ENCODE measurements at regions of chr22 and their contacts with region 1.

Region 1: GRCh38 chr22:41285820-41286638 is at the start of gene RANGAP1:
- DNase-seq: peak; percentile 99
- ATAC-seq: peak; percentile 94
- H3K4me3 Mint-ChIP-seq: peak within 1 kb of the TSS; percentile 88
- H3K27ac Mint-ChIP-seq: peak within 1 kb of the TSS; percentile 97
- H3K4me1 Mint-ChIP-seq: peaks cover 33% of the 10 kb centered on the region
- H3K27me3 Mint-ChIP-seq: no peaks in the 10 kb centered on the region
- total RNA-seq, gene RANGAP1: 140 to 157 TPM

Region 2: DNA sequence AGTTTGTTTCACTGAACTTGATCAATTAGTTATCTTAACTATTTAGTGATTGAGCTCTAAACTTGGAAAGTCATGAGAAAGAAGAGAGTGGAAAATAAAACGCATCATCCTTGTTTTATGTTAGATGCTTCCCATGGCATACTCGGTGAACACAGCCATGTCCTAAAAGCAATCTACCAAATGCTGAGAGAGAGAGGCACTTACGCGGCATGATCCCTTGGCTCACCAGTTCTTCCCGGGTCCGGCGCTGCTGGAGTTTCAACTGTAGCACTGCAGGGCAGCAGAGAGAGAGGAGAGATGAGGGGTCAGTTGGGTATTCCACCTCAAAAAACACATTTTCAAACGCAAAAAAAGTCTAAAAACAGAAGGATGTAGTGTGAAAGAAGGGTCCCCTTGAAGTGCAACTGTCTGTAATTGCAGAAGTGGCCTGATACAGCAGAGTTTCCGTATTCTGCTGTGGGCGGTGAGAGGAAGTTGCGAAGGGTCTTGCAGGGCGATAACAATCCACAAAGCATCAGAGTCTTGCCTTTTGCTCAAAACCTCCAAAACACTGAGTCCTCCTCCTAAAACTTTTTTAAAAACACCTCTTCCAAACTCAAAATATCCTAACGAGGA is 822.9 kb before region 1 on chr22:
- CTCF ChIA-PET with region 1: no interaction called
- POLR2A ChIA-PET with region 1: no interaction called
- intact Hi-C with region 1: loop called in 1 of 2 experiments (anchors 5 kb)
- DNase-seq: peak; percentile 74
- ATAC-seq: peak; percentile 84
- H3K4me3 Mint-ChIP-seq: peak overlapping the region; percentile 87
- H3K27ac Mint-ChIP-seq: peak overlapping the region; percentile 91
- H3K4me1 Mint-ChIP-seq: peaks cover 65% of the 10 kb centered on the region
- H3K27me3 Mint-ChIP-seq: no peaks in the 10 kb centered on the region

Region 3: GRCh38 chr22:40856513-40857308 is 429.3 kb before region 1 on chr22 and contains the starts of genes ST13 and XPNPEP3:
- CTCF ChIA-PET with region 1: no interaction called
- POLR2A ChIA-PET with region 1: no interaction called
- intact Hi-C with region 1: loop called in 1 of 2 experiments (anchors 1 kb)
- DNase-seq: peak; percentile 98
- ATAC-seq: peak; percentile 96
- H3K4me3 Mint-ChIP-seq: peak within 1 kb of the TSS; percentile 97
- H3K27ac Mint-ChIP-seq: peak within 1 kb of the TSS; percentile 99
- H3K4me1 Mint-ChIP-seq: peaks cover 53% of the 10 kb centered on the region
- H3K27me3 Mint-ChIP-seq: no peaks in the 10 kb centered on the region
- total RNA-seq, gene ST13: 260 to 297 TPM
- total RNA-seq, gene XPNPEP3: 21.5 to 25.8 TPM

Region 4: GRCh38 chr22:41197038-41197972 is 88.7 kb before region 1 on chr22:
- CTCF ChIA-PET with region 1: no interaction called
- POLR2A ChIA-PET with region 1: interaction called, 4 read pairs
- intact Hi-C with region 1: loop called in 1 of 2 experiments (anchors 1 kb)
- DNase-seq: peak; percentile 89
- ATAC-seq: peak; percentile 82
- H3K4me3 Mint-ChIP-seq: peak overlapping the region; percentile 77
- H3K27ac Mint-ChIP-seq: no peak overlapping the region
- H3K4me1 Mint-ChIP-seq: peaks cover 11% of the 10 kb centered on the region
- H3K27me3 Mint-ChIP-seq: no peaks in the 10 kb centered on the region

Region 5: GRCh38 chr22:41301105-41302020 is 15.3 kb after region 1 on chr22 and contains the start of gene ZC3H7B:
- CTCF ChIA-PET with region 1: interaction called, 15 read pairs
- POLR2A ChIA-PET with region 1: interaction called, 20 read pairs
- intact Hi-C with region 1: loop called (anchors 1 to 2 kb)
- DNase-seq: peak; percentile 92
- ATAC-seq: peak; percentile 96
- H3K4me3 Mint-ChIP-seq: peak within 1 kb of the TSS; percentile 74
- H3K27ac Mint-ChIP-seq: peak within 1 kb of the TSS; percentile 76
- H3K4me1 Mint-ChIP-seq: peaks cover 31% of the 10 kb centered on the region
- H3K27me3 Mint-ChIP-seq: no peaks in the 10 kb centered on the region
- total RNA-seq, gene ZC3H7B: 41.7 to 43.4 TPM

Region 6: DNA sequence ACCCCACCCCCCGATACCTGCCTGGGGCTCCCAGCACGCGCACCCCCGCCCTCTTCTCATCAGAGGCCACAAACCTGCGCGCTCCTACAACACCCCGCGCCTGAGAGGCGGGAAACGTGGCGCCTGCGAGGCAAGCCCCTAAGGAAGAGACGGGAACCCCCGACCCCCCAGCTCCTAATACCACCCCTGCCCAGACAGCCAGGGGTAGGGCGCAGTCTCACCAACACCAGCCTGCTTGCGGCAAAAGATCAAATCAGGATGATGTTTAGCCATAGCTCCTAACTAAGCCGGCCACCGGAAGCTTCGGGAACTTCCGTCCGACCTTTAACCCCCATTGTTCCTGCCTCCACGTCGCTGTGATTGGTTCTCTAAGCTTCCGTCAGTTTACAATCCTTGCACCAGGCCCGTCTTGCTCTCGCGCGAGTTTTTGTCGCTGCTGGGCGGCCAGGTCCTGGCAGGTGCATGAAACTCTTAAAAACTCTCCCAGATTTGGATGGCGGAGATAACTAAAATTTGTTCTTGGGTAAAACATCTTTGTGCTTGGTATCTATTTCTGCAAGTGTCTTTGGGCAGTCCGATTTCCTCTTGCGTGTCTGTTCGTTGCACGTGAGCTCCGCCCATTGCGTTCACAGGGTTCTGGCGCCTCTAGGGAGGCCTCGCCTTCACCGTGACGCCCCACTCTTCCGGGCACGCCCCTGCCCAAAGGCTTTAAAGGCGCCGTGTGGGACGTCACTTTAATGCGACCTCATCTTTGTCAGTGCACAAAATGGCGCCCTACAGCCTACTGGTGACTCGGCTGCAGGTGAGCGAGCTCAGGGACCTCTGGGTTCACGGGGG is 182.6 kb after region 1 on chr22 and contains the starts of genes ACO2 and PHF5A:
- CTCF ChIA-PET with region 1: no interaction called
- POLR2A ChIA-PET with region 1: interaction called, 11 read pairs
- intact Hi-C with region 1: loop called (anchors 1 kb)
- DNase-seq: peak; percentile 98
- ATAC-seq: peak; percentile 94
- H3K4me3 Mint-ChIP-seq: peak within 1 kb of the TSS; percentile 90
- H3K27ac Mint-ChIP-seq: peak within 1 kb of the TSS; percentile 99
- H3K4me1 Mint-ChIP-seq: peaks cover 47% of the 10 kb centered on the region
- H3K27me3 Mint-ChIP-seq: no peaks in the 10 kb centered on the region
- total RNA-seq, gene ACO2: 95.4 to 106 TPM
- total RNA-seq, gene PHF5A: 54.5 to 61.1 TPM

Region 7: GRCh38 chr22:41589391-41590241 is 303.6 kb after region 1 on chr22 and contains the start of gene PMM1:
- CTCF ChIA-PET with region 1: interaction called, 3 read pairs
- POLR2A ChIA-PET with region 1: interaction called, 5 read pairs
- intact Hi-C with region 1: loop called in 1 of 2 experiments (anchors 1 kb)
- DNase-seq: peak; percentile 100
- ATAC-seq: peak; percentile 99
- H3K4me3 Mint-ChIP-seq: peak within 1 kb of the TSS; percentile 88
- H3K27ac Mint-ChIP-seq: peak within 1 kb of the TSS; percentile 85
- H3K4me1 Mint-ChIP-seq: peaks cover 15% of the 10 kb centered on the region
- H3K27me3 Mint-ChIP-seq: no peaks in the 10 kb centered on the region
- total RNA-seq, gene PMM1: 30.4 to 37.4 TPM

Measured in activated CD4-positive, alpha-beta T cell treated with anti-CD3 and anti-CD28 coated beads for 36 hours (primary cell).